ENCODE measurements at regions of chr11 and their contacts with region 1.

Region 1: GRCh38 chr11:72683782-72684200 is 9.6 kb upstream of the PDE2A start:
- DNase-seq: peak; percentile 92
- H3K4me3 Mint-ChIP-seq: no peak overlapping the region
- H3K27ac Mint-ChIP-seq: peak overlapping the region; percentile 37
- H3K4me1 Mint-ChIP-seq: peaks cover 46% of the 10 kb centered on the region
- H3K27me3 Mint-ChIP-seq: peaks cover 5% of the 10 kb centered on the region

Region 2: DNA sequence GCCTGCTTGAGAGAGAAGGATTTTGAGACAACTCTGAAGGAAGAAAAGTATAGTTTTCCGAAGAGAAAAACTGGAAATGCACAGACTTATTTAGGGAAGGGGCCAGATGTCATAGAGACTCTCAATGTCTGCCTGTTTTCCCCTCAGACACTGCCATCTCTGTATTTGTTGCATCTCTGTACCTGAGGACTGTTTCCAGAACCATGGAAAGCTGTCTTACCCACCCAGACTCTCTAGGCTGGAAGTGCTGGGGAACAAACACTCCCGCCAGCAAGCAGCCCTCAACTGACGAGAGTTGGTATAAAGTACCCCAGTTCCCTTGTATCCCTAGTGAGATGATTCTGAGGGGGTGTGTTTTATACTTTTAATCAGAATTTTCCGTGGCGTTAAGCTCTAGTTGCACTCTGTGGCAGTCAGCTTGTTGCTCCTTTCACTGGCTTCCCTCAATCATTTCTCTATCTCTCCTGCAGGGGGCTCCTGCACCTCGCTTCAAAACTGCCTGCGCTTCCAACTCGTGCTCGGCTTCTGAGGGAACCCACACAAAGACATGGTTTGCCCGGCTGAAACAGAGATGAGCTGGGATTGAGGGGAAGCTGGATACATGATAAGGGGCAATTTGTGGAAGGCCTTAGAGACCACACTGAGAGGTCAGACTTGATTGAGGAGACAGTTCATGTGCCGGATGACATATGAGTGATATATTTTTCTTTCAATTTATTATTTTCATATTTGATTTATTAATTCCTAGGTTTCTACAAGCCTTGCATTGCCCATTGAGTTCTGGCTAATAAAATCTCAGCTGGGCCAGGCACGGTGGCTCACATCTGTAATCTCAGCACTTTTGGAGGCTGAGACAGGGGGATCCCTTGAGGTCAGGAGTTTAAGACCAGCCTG is 212.5 kb before region 1 on chr11:
- intact Hi-C with region 1: loop called (anchors 5 kb)
- DNase-seq: peak; percentile 89
- H3K4me3 Mint-ChIP-seq: peak overlapping the region; percentile 22
- H3K27ac Mint-ChIP-seq: no peak overlapping the region
- H3K4me1 Mint-ChIP-seq: peaks cover 2% of the 10 kb centered on the region
- H3K27me3 Mint-ChIP-seq: peaks cover 55% of the 10 kb centered on the region

Region 3: GRCh38 chr11:72585762-72586311 is 98.0 kb before region 1 on chr11:
- intact Hi-C with region 1: loop called (anchors 1 kb)
- DNase-seq: peak; percentile 92
- H3K4me3 Mint-ChIP-seq: peak overlapping the region; percentile 70
- H3K27ac Mint-ChIP-seq: no peak overlapping the region
- H3K4me1 Mint-ChIP-seq: peaks cover 28% of the 10 kb centered on the region
- H3K27me3 Mint-ChIP-seq: peaks cover 55% of the 10 kb centered on the region

Region 4: DNA sequence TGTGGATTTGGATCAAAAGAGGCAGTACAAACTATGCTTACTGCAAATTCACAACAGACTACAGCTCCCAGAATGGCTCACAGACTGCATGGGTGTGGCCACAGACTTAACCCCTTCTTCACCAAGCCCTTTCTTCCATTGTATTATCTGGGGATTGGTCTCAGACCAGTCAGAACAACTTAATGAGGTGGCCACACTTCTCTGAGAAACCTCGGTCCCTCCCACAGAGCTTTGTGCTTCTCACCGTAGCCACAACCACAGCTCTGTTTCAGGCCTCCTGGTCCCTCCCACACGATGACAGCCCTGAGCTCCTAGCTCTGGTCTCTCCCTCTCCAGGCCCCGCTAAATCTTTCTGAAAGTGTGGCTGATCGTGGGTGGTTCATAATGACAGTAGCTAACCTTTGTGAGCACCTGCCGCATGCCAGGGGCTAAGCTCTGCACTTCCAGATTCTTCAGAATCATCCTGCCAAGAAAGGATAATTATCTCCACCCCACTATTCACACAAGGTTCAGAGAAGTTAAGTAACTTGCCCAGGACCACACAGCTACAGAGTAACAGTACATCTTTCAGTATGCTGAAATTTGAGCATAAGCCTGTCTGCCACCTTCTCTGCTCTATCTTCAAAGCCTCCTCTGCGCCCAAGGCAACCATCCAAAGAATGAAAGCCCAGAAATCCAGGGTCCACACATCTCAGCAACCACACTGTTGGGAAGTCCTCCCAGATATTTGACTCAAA is 15.0 kb before region 1 on chr11:
- intact Hi-C with region 1: loop called (anchors 2 kb)
- DNase-seq: peak; percentile 84
- H3K4me3 Mint-ChIP-seq: peak overlapping the region; percentile 14
- H3K27ac Mint-ChIP-seq: peak overlapping the region; percentile 59
- H3K4me1 Mint-ChIP-seq: peaks cover 17% of the 10 kb centered on the region
- H3K27me3 Mint-ChIP-seq: peaks cover 41% of the 10 kb centered on the region

Measured in activated CD4-positive, alpha-beta T cell treated with anti-CD3 and anti-CD28 coated beads, Interleukin-2, amount 10 ng/mL, durations not matched to agents 24 days and 14 days (primary cell).